ENCODE measurements at regions of chr18 and their contacts with region 1.

Region 1: DNA sequence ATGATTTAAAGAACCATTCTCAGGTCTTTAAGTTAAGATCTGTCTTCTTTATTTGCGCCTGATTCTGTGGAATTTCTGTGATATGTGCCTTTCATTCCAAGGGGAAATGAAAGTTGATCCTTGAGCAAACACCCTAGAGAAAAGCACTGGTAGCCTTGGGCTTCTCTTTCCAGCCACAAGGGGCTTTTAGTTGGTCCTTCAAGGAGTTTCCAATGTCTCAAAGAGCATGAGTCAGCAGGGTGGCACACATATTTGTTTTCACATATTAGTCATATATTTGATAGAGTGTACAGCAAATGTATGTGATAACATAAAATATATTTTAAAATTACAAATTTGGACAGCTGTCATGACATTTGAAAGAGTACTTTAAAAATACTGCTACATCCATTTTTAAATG is 339.5 kb downstream of the TXNL1 start:
- DNase-seq: peak; percentile 75
- H3K4me3 ChIP-seq: no peak overlapping the region
- H3K27ac ChIP-seq: no peak overlapping the region
- H3K4me1 ChIP-seq: peaks cover 7% of the 10 kb centered on the region
- H3K27me3 ChIP-seq: no peaks in the 10 kb centered on the region
- CTCF ChIP-seq: peak; percentile 40 to 46
- POLR2A ChIP-seq: no peak

Region 2: GRCh38 chr18:56085551-56085950 is 213.4 kb before region 1 on chr18:
- CTCF ChIA-PET with region 1: no interaction called
- POLR2A ChIA-PET with region 1: no interaction called
- dilution Hi-C with region 1: no loop called
- intact Hi-C with region 1: no loop called
- DNase-seq: no peak
- H3K4me3 ChIP-seq: no peak overlapping the region
- H3K27ac ChIP-seq: no peak overlapping the region
- H3K4me1 ChIP-seq: peaks cover 26% of the 10 kb centered on the region
- H3K27me3 ChIP-seq: no peaks in the 10 kb centered on the region
- CTCF ChIP-seq: no peak
- POLR2A ChIP-seq: no peak

Region 3: GRCh38 chr18:56284319-56284718 is 14.6 kb before region 1 on chr18:
- CTCF ChIA-PET with region 1: no interaction called
- POLR2A ChIA-PET with region 1: no interaction called
- dilution Hi-C with region 1: no loop called
- intact Hi-C with region 1: no loop called
- DNase-seq: no peak
- H3K4me3 ChIP-seq: no peak overlapping the region
- H3K27ac ChIP-seq: no peak overlapping the region
- H3K4me1 ChIP-seq: peaks cover 3% of the 10 kb centered on the region
- H3K27me3 ChIP-seq: no peaks in the 10 kb centered on the region
- CTCF ChIP-seq: no peak
- POLR2A ChIP-seq: no peak

Region 4: GRCh38 chr18:56309104-56309503 is 10.2 kb after region 1 on chr18:
- CTCF ChIA-PET with region 1: no interaction called
- POLR2A ChIA-PET with region 1: no interaction called
- dilution Hi-C with region 1: no loop called
- intact Hi-C with region 1: loop called (anchors 1 kb)
- DNase-seq: peak; percentile 41
- H3K4me3 ChIP-seq: no peak overlapping the region
- H3K27ac ChIP-seq: no peak overlapping the region
- H3K4me1 ChIP-seq: peaks cover 4% of the 10 kb centered on the region
- H3K27me3 ChIP-seq: no peaks in the 10 kb centered on the region
- CTCF ChIP-seq: no peak
- POLR2A ChIP-seq: no peak

Region 5: DNA sequence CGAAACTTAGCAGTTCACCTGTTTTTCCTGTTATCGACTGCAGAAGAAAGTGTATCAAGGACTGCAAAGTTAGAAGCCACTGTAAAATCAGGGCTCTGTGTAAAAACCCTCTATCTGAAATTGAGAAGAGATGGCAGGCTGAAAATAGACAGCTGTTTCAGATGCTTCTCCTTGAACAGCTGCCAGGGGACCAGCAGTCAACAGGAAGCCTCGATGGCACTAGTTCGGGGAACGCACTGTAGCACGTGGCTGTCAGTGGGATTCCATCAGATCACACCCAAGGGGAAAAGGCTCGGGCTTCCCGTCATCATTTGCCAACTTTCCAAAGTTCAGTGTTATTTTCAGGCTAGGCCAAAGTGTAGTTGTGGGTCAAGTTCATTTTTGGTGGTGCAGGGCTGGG is 22.5 kb after region 1 on chr18:
- CTCF ChIA-PET with region 1: interaction called, 3 read pairs
- POLR2A ChIA-PET with region 1: no interaction called
- dilution Hi-C with region 1: no loop called
- intact Hi-C with region 1: loop called (anchors 1 kb)
- DNase-seq: no peak
- H3K4me3 ChIP-seq: no peak overlapping the region
- H3K27ac ChIP-seq: no peak overlapping the region
- H3K4me1 ChIP-seq: no peaks in the 10 kb centered on the region
- H3K27me3 ChIP-seq: no peaks in the 10 kb centered on the region
- CTCF ChIP-seq: no peak
- POLR2A ChIP-seq: no peak